Uterus (tissue), 4 donors: ENCODE measurements at regions of chr1 and their contacts with region 1.

Region 1: GRCh38 chr1:9269078-9269501 is 23.6 kb upstream of the SPSB1 start:
- DNase-seq: no peak
- H3K4me3 ChIP-seq: no peak overlapping the region
- H3K27ac ChIP-seq: no peak overlapping the region
- H3K4me1 ChIP-seq: no peaks in the 10 kb centered on the region
- H3K27me3 ChIP-seq: no peaks in the 10 kb centered on the region
- CTCF ChIP-seq: no peak
- POLR2A ChIP-seq: no peak

Region 2: GRCh38 chr1:9058465-9058864 is 210.6 kb before region 1 on chr1:
- intact Hi-C with region 1: no loop called
- DNase-seq: no peak
- H3K4me3 ChIP-seq: no peak overlapping the region
- H3K27ac ChIP-seq: no peak overlapping the region
- H3K4me1 ChIP-seq: no peaks in the 10 kb centered on the region
- H3K27me3 ChIP-seq: no peaks in the 10 kb centered on the region
- CTCF ChIP-seq: peak in 1 of 4 experiments; percentile 18
- POLR2A ChIP-seq: no peak

Region 3: DNA sequence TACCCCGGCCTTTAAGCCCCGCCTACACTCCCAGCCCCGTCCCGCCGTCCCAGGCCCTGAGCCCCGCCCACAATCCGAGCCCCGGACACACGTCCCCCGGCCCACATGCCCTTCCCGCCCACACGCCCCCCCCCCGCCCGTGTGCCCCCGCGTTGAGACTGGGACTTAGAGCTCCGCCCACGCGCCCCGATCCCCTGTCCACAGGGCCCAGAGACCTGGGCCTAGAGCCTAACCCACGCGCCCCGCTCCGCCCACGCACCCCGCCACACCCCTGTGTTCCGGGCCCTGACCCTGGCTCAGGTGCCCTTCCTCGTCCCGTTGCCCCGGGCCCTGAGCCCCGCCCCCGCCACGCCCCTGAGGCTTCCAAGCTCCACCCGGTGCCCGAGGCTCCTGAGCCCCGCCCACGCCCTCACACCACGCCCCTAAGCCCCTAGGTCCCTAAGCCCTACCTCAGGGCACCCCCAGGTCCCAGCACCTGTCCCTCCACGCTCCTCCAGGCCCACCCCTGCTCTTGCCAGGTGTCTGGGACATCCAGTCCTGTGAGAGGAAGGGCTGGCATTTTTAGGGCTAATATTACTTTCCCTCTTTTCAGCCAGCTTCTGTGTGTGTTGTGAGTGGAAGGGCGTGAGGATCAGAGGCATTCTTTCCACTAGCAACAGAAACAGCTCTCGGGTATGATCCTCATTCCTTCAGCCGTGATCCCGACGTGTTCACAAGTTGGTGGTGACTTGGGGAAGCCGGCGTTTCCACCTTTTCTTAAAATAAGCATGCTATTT is 139.6 kb before region 1 on chr1:
- intact Hi-C with region 1: no loop called
- DNase-seq: peak; percentile 87 to 90
- H3K4me3 ChIP-seq: peak overlapping the region; percentile 56 to 91
- H3K27ac ChIP-seq: peak overlapping the region; percentile 85 to 97
- H3K4me1 ChIP-seq: peaks cover 0 to 7% of the 10 kb centered on the region in 2 donors
- H3K27me3 ChIP-seq: no peaks in the 10 kb centered on the region
- CTCF ChIP-seq: no peak
- POLR2A ChIP-seq: no peak

Region 4: DNA sequence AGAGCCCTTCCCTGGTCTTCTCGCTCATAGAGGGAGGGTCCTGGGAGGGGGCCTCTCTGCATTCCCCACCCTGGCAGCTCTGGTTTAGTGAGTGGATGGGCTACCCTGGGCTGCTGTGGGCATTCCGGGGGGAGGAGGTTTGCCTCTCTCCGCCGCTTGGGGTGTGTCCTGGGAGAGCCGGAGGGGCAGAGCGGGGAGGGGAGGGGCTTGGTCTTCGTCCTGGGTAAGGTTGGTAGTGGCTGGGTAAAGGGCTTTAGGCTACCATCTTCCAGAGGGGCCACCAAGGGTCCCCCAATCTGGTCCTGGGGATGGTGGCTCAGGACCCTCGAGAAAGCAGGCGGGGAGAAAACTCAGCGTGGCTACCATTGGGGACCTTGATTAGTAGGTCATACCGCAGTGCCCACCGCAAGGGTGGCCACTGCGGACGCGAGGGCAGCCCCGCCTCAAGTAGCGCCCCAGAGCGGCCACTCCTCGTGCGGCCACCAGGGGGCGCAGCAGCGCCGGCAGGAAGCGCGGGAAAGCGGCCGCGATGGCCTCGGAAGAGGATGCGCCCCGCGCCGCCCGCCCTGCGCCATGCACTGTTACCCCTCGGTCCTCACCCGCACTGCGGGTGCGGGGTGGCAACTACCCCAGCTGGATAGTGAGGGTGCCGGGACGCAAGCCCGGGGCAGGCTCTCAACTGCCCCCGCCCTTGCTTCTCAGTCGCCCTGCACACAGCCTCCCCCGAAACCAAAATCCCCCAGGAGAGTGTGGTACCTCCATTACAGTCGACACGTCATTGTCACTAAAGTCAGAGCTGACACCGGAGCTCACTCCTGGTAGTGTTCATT is 226.1 kb after region 1 on chr1:
- intact Hi-C with region 1: loop called (anchors 5 kb)
- DNase-seq: peak; percentile 25 to 57
- H3K4me3 ChIP-seq: peak overlapping the region in 1 of 2 donors; percentile 6
- H3K27ac ChIP-seq: no peak overlapping the region
- H3K4me1 ChIP-seq: no peaks in the 10 kb centered on the region
- H3K27me3 ChIP-seq: no peaks in the 10 kb centered on the region
- CTCF ChIP-seq: peak; percentile 90 to 95 (median 93)
- POLR2A ChIP-seq: peak in 1 of 2 donors; percentile 18